ENCODE measurements at regions of chr16 and their contacts with region 1.

Region 1: GRCh38 chr16:30941600-30942425 is 7.1 kb upstream of the ORAI3 start:
- DNase-seq: peak; percentile 80
- H3K4me3 Mint-ChIP-seq: no peak overlapping the region
- H3K27ac Mint-ChIP-seq: peak overlapping the region; percentile 97
- H3K4me1 Mint-ChIP-seq: peaks cover 22% of the 10 kb centered on the region
- H3K27me3 Mint-ChIP-seq: no peaks in the 10 kb centered on the region
- CTCF ChIP-seq: peak; percentile 84

Region 2: GRCh38 chr16:30844671-30845449 is 97.0 kb before region 1 on chr16:
- CTCF ChIA-PET with region 1: interaction called, 67 read pairs
- POLR2A ChIA-PET with region 1: interaction called, 13 read pairs
- intact Hi-C with region 1: loop called (anchors 1 kb)
- DNase-seq: peak; percentile 90
- H3K4me3 Mint-ChIP-seq: no peak overlapping the region
- H3K27ac Mint-ChIP-seq: no peak overlapping the region
- H3K4me1 Mint-ChIP-seq: no peaks in the 10 kb centered on the region
- H3K27me3 Mint-ChIP-seq: no peaks in the 10 kb centered on the region
- CTCF ChIP-seq: peak; percentile 83

Region 3: DNA sequence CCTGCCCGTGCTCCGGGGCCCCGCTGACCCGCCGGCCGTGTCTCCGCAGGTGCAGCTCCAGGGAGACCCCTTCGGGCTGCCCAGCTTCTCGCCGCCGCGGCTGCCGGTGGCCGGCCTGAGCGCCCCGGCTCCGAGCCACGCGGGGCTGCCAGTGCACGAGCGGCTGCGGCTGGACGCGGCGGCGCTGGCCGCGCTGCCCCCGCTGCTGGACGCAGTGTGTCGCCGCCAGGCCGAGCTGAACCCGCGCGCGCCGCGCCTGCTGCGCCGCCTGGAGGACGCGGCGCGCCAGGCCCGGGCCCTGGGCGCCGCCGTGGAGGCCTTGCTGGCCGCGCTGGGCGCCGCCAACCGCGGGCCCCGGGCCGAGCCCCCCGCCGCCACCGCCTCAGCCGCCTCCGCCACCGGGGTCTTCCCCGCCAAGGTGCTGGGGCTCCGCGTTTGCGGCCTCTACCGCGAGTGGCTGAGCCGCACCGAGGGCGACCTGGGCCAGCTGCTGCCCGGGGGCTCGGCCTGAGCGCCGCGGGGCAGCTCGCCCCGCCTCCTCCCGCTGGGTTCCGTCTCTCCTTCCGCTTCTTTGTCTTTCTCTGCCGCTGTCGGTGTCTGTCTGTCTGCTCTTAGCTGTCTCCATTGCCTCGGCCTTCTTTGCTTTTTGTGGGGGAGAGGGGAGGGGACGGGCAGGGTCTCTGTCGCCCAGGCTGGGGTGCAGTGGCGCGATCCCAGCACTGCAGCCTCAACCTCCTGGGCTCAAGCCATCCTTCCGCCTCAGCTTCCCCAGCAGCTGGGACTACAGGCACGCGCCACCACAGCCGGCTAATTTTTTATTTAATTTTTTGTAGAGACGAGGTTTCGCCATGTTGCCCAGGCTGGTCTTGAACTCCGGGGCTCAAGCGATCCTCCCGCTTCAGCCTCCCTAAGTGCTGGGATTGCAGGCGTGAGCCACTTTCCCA is 39.5 kb before region 1 on chr16:
- CTCF ChIA-PET with region 1: interaction called, 39 read pairs
- POLR2A ChIA-PET with region 1: interaction called, 5 read pairs
- intact Hi-C with region 1: no loop called
- DNase-seq: peak; percentile 57
- H3K4me3 Mint-ChIP-seq: peak overlapping the region; percentile 75
- H3K27ac Mint-ChIP-seq: peak overlapping the region; percentile 55
- H3K4me1 Mint-ChIP-seq: peaks cover under 1% of the 10 kb centered on the region
- H3K27me3 Mint-ChIP-seq: no peaks in the 10 kb centered on the region
- CTCF ChIP-seq: no peak

Region 4: DNA sequence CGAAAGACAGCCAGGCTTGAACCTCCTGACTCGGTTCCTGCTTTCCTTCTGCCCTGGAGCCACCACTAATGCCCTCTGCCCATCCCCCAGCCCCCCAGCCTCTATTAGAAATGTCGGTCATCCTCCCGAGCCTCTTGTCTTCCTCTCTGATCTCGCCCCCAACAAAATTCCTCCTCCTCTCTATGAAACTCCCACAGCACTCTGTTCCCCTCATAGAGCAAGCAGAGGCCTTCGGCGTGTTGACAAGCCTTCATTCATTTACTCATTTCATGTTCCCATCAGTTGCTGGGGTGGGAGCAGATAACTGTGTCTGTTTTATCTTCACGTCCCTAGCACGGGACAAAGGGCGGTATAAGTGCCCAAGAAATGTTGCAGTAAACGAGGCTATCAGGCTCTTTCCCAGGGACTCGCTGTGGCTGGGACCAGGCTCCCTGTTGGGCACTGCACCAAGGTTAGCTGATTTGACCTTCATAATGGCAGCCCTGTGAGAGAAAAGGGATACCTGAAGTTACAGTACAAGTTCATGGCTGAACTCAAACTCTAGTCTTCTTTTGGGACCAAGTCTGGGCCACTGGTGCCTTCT is 10.7 kb before region 1 on chr16:
- CTCF ChIA-PET with region 1: interaction called, 29 read pairs
- POLR2A ChIA-PET with region 1: interaction called, 4 read pairs
- intact Hi-C with region 1: no loop called
- DNase-seq: no peak
- H3K4me3 Mint-ChIP-seq: no peak overlapping the region
- H3K27ac Mint-ChIP-seq: no peak overlapping the region
- H3K4me1 Mint-ChIP-seq: peaks cover 1% of the 10 kb centered on the region
- H3K27me3 Mint-ChIP-seq: no peaks in the 10 kb centered on the region
- CTCF ChIP-seq: no peak

Region 5: DNA sequence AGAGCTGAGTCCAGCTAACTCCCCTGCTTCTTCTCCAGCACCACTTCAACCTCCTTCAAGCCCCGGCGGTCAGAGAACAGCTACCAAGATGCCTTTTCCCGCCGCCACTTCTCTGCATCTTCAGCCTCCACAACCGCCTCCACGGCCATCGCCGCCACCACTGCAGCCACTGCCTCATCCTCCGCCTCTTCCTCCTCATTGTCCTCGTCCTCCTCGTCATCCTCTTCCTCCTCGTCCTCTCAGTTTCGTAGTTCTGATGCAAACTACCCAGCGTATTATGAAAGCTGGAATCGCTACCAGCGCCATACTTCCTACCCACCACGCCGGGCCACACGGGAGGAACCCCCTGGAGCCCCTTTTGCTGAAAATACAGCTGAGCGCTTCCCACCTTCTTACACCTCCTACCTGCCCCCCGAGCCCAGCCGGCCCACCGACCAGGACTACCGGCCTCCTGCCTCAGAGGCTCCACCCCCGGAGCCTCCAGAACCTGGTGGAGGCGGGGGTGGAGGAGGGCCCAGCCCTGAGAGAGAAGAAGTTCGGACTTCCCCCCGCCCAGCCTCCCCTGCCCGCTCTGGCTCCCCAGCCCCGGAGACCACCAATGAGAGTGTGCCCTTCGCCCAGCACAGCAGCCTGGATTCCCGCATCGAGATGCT is 22.9 kb after region 1 on chr16:
- CTCF ChIA-PET with region 1: no interaction called
- POLR2A ChIA-PET with region 1: no interaction called
- intact Hi-C with region 1: no loop called
- DNase-seq: no peak
- H3K4me3 Mint-ChIP-seq: no peak overlapping the region
- H3K27ac Mint-ChIP-seq: no peak overlapping the region
- H3K4me1 Mint-ChIP-seq: peaks cover 5% of the 10 kb centered on the region
- H3K27me3 Mint-ChIP-seq: no peaks in the 10 kb centered on the region
- CTCF ChIP-seq: no peak

Region 6: GRCh38 chr16:30990105-30990504 is 48.3 kb after region 1 on chr16:
- CTCF ChIA-PET with region 1: no interaction called
- POLR2A ChIA-PET with region 1: no interaction called
- intact Hi-C with region 1: no loop called
- DNase-seq: no peak
- H3K4me3 Mint-ChIP-seq: no peak overlapping the region
- H3K27ac Mint-ChIP-seq: no peak overlapping the region
- H3K4me1 Mint-ChIP-seq: peaks cover 10% of the 10 kb centered on the region
- H3K27me3 Mint-ChIP-seq: no peaks in the 10 kb centered on the region
- CTCF ChIP-seq: no peak

Measured in MCF 10A (cell line).